ENCODE measurements at regions of chr6 and their contacts with region 1.

Region 1: GRCh38 chr6:130322673-130323268 is 43.0 kb upstream of the TMEM200A start:
- DNase-seq: peak; percentile 68
- H3K4me3 Mint-ChIP-seq: no peak overlapping the region
- H3K27ac Mint-ChIP-seq: no peak overlapping the region
- H3K4me1 Mint-ChIP-seq: peaks cover 10% of the 10 kb centered on the region
- H3K27me3 Mint-ChIP-seq: peaks cover 14% of the 10 kb centered on the region

Region 2: GRCh38 chr6:130307752-130308361 is 14.9 kb before region 1 on chr6:
- CTCF ChIA-PET with region 1: interaction called, 10 read pairs
- DNase-seq: no peak
- H3K4me3 Mint-ChIP-seq: no peak overlapping the region
- H3K27ac Mint-ChIP-seq: no peak overlapping the region
- H3K4me1 Mint-ChIP-seq: peaks cover 3% of the 10 kb centered on the region
- H3K27me3 Mint-ChIP-seq: peaks cover 3% of the 10 kb centered on the region

Region 3: DNA sequence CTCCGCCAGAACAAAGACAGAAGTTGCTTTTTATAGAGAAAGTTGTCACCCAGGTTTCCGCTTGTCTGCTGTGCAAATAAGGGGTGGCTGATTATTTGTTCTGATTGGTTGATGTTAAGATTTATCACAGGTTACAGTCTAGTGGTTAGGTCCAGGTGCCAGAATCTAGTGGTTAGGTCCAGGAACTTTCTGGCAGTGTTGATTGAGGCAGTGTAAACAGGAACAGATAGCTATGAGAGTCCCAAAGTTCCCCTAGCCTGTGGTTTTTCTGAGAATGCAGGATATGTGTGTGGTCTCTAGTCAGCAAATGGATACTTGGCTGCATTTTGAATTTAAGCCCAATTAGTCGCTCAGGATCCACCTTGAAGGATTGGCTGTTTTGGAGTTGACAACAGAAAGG is 191.0 kb after region 1 on chr6:
- CTCF ChIA-PET with region 1: no interaction called
- DNase-seq: peak; percentile 84
- H3K4me3 Mint-ChIP-seq: peak overlapping the region; percentile 0
- H3K27ac Mint-ChIP-seq: peak overlapping the region; percentile 95
- H3K4me1 Mint-ChIP-seq: peaks cover 68% of the 10 kb centered on the region
- H3K27me3 Mint-ChIP-seq: no peaks in the 10 kb centered on the region